CD4-positive, alpha-beta memory T cell (primary cell): ENCODE measurements at regions of chr17 and their contacts with region 1.

Region 1: GRCh38 chr17:7867881-7868329 is 10.1 kb downstream of the CYB5D1 start:
- DNase-seq: peak in 1 of 5 donors; percentile 36
- H3K4me3 ChIP-seq: peak overlapping the region in 1 of 2 donors; percentile 29
- H3K4me3 Mint-ChIP-seq: peak overlapping the region; percentile 50 to 84 (median 72)
- H3K27ac ChIP-seq: peak overlapping the region; percentile 39
- H3K27ac Mint-ChIP-seq: peak overlapping the region; percentile 59 to 90 (median 89)
- H3K4me1 ChIP-seq: peaks cover 30% of the 10 kb centered on the region
- H3K4me1 Mint-ChIP-seq: peaks cover 27 to 41% (median 34%) of the 10 kb centered on the region in 4 donors
- H3K27me3 ChIP-seq: no peaks in the 10 kb centered on the region
- H3K27me3 Mint-ChIP-seq: no peaks in the 10 kb centered on the region

Region 2: DNA sequence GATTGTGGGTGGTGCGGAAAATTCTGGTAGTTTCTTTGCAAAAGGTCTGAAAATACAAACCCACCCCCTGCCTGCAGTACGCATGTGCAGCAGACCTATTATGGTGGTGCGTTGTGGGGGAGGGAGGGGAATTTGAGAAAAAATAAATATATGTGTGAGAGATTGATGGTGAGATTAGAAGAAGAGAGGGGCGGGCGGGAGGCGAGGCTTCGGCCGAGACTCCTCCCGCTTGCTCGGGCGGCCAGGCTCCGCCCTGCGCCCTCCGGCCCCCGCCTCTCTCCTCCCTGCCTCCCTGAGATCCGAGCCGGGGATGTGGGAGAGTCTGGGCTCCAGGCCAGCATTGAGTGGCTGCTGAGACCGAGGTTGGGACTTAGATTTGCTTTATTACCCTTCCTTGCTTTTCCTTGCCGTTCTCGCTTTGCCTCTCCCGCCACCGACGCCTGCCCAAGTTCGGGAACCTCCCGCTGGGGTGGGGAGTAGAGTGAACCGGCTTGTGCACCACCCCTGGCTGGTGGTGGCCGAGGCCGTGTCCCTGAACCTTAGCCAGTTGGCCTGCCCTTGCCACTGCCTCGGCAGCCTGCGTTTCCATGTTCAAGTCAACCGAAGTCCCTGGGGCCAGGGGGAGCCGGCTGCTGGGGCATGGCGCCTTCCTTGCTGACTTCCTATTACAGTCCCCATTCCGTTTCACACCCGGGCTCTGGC is 19.7 kb after region 1 on chr17:
- CTCF ChIA-PET with region 1: interaction called, 13 read pairs
- POLR2A ChIA-PET with region 1: interaction called, 19 read pairs
- intact Hi-C with region 1: loop called (anchors 2 kb)
- DNase-seq: peak; percentile 89 to 95 (median 92)
- H3K4me3 ChIP-seq: peak overlapping the region; percentile 86 to 96
- H3K4me3 Mint-ChIP-seq: no peak overlapping the region
- H3K27ac ChIP-seq: peak overlapping the region; percentile 65
- H3K27ac Mint-ChIP-seq: no peak overlapping the region
- H3K4me1 ChIP-seq: peaks cover 46% of the 10 kb centered on the region
- H3K4me1 Mint-ChIP-seq: peaks cover 10 to 16% (median 12%) of the 10 kb centered on the region in 4 donors
- H3K27me3 ChIP-seq: no peaks in the 10 kb centered on the region
- H3K27me3 Mint-ChIP-seq: no peaks in the 10 kb centered on the region

Region 3: GRCh38 chr17:7897773-7898172 is 29.9 kb after region 1 on chr17:
- CTCF ChIA-PET with region 1: interaction called, 55 read pairs
- POLR2A ChIA-PET with region 1: interaction called, 3 read pairs
- intact Hi-C with region 1: no loop called
- DNase-seq: peak; percentile 29 to 43 (median 36)
- H3K4me3 ChIP-seq: no peak overlapping the region
- H3K4me3 Mint-ChIP-seq: no peak overlapping the region
- H3K27ac ChIP-seq: no peak overlapping the region
- H3K27ac Mint-ChIP-seq: peak overlapping the region; percentile 11 to 82 (median 38)
- H3K4me1 ChIP-seq: no peaks in the 10 kb centered on the region
- H3K4me1 Mint-ChIP-seq: peaks cover 7 to 27% (median 11%) of the 10 kb centered on the region in 4 donors
- H3K27me3 ChIP-seq: no peaks in the 10 kb centered on the region
- H3K27me3 Mint-ChIP-seq: no peaks in the 10 kb centered on the region